ENCODE measurements at regions of chr4 and their contacts with region 1.

Region 1: GRCh38 chr4:65416891-65417290 is 253.4 kb downstream of the EPHA5 start:
- DNase-seq: peak; percentile 80
- H3K4me3 ChIP-seq: no peak overlapping the region
- H3K27ac ChIP-seq: no peak overlapping the region
- H3K4me1 ChIP-seq: no peaks in the 10 kb centered on the region
- H3K27me3 ChIP-seq: no peaks in the 10 kb centered on the region
- CTCF ChIP-seq: no peak
- POLR2A ChIP-seq: no peak

Region 2: GRCh38 chr4:65399084-65399483 is 17.8 kb before region 1 on chr4:
- CTCF ChIA-PET with region 1: interaction called, 12 read pairs
- POLR2A ChIA-PET with region 1: no interaction called
- dilution Hi-C with region 1: no loop called
- intact Hi-C with region 1: no loop called
- DNase-seq: no peak
- H3K4me3 ChIP-seq: no peak overlapping the region
- H3K27ac ChIP-seq: no peak overlapping the region
- H3K4me1 ChIP-seq: no peaks in the 10 kb centered on the region
- H3K27me3 ChIP-seq: no peaks in the 10 kb centered on the region
- CTCF ChIP-seq: no peak
- POLR2A ChIP-seq: no peak

Region 3: GRCh38 chr4:65917486-65917885 is 500.6 kb after region 1 on chr4:
- CTCF ChIA-PET with region 1: no interaction called
- POLR2A ChIA-PET with region 1: no interaction called
- dilution Hi-C with region 1: no loop called
- intact Hi-C with region 1: no loop called
- DNase-seq: no peak
- H3K4me3 ChIP-seq: no peak overlapping the region
- H3K27ac ChIP-seq: no peak overlapping the region
- H3K4me1 ChIP-seq: no peaks in the 10 kb centered on the region
- H3K27me3 ChIP-seq: no peaks in the 10 kb centered on the region
- CTCF ChIP-seq: no peak
- POLR2A ChIP-seq: no peak